Panc1 (cell line): ENCODE measurements at regions of chr12 and their contacts with region 1.

Region 1: DNA sequence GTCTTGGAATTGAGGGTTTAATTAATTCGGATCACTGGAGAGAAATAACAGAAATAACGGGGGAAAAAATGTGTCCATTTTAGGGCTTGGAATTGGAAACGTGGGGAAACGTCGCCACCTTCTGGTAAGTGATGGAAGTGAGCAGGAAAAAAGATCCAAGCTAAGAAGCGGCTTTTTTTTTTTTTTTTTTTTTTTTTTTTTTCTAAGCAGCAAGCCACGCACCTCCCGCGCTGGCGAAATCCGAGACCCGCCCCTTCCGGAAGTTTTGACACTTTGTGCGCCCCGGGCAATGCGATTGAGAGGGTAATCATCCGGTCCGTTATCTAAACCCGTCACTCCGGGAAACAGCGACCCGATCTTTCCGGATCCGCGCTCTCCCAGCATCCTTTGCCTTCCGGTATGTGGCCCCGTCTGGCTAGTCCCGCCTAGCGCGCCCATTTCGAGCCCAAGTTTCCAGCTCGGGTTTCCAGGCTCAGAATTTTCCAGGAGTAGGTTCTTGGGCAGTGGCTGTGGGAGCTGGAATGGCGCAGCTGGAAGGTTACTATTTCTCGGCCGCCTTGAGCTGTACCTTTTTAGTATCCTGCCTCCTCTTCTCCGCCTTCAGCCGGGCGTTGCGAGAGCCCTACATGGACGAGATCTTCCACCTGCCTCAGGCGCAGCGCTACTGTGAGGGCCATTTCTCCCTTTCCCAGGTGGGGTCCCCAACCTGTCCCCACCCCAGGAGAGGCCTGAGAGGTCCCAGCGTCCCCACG is at the start of gene ALG10:
- DNase-seq: peak; percentile 97
- ATAC-seq: peak; percentile 100
- H3K4me3 ChIP-seq: peak within 1 kb of the TSS; percentile 79 to 96
- H3K27ac ChIP-seq: peak within 1 kb of the TSS; percentile 88
- H3K4me1 ChIP-seq: peaks cover 7% of the 10 kb centered on the region
- H3K27me3 ChIP-seq: peaks cover 3% of the 10 kb centered on the region; the same call in 1 of the 2 replicates
- CTCF ChIP-seq: peak; percentile 61
- total RNA-seq, gene ALG10: 10.3 TPM

Region 2: GRCh38 chr12:32947206-32948067 is 1074.8 kb before region 1 on chr12:
- CTCF ChIA-PET with region 1: interaction called, 6 read pairs
- POLR2A ChIA-PET with region 1: no interaction called
- in situ Hi-C with region 1: no loop called
- intact Hi-C with region 1: loop called (anchors 2 kb)
- DNase-seq: peak; percentile 22
- ATAC-seq: peak; percentile 76; the same call in 1 of the 2 replicates
- H3K4me3 ChIP-seq: no peak overlapping the region
- H3K27ac ChIP-seq: no peak overlapping the region
- H3K4me1 ChIP-seq: no peaks in the 10 kb centered on the region
- H3K27me3 ChIP-seq: no peaks in the 10 kb centered on the region; the same call in 1 of the 2 replicates
- CTCF ChIP-seq: peak; percentile 45; the same call in 1 of the 2 replicates

Region 3: GRCh38 chr12:33734871-33735270 is 287.4 kb before region 1 on chr12:
- CTCF ChIA-PET with region 1: no interaction called
- POLR2A ChIA-PET with region 1: no interaction called
- in situ Hi-C with region 1: no loop called
- intact Hi-C with region 1: no loop called
- DNase-seq: no peak
- ATAC-seq: no peak
- H3K4me3 ChIP-seq: no peak overlapping the region
- H3K27ac ChIP-seq: no peak overlapping the region
- H3K4me1 ChIP-seq: no peaks in the 10 kb centered on the region
- H3K27me3 ChIP-seq: no peaks in the 10 kb centered on the region
- CTCF ChIP-seq: no peak